ENCODE measurements at regions of chr17 and their contacts with region 1.

Region 1: GRCh38 chr17:43483674-43484372 is at the start of gene DHX8:
- DNase-seq: peak; percentile 99
- H3K4me3 Mint-ChIP-seq: peak within 1 kb of the TSS; percentile 99
- H3K27ac Mint-ChIP-seq: peak within 1 kb of the TSS; percentile 95
- H3K4me1 Mint-ChIP-seq: peaks cover 18% of the 10 kb centered on the region
- H3K27me3 Mint-ChIP-seq: no peaks in the 10 kb centered on the region
- total RNA-seq, gene DHX8: 47.8 to 54.1 TPM

Region 2: GRCh38 chr17:43211480-43212402 is 272.1 kb before region 1 on chr17 and contains the start of gene TMEM106A:
- CTCF ChIA-PET with region 1: no interaction called
- POLR2A ChIA-PET with region 1: no interaction called
- intact Hi-C with region 1: loop called (anchors 10 kb)
- DNase-seq: peak; percentile 85
- H3K4me3 Mint-ChIP-seq: peak within 1 kb of the TSS; percentile 88
- H3K27ac Mint-ChIP-seq: peak within 1 kb of the TSS; percentile 82
- H3K4me1 Mint-ChIP-seq: peaks cover 27% of the 10 kb centered on the region
- H3K27me3 Mint-ChIP-seq: no peaks in the 10 kb centered on the region
- total RNA-seq, gene TMEM106A: 10.1 to 10.4 TPM

Region 3: DNA sequence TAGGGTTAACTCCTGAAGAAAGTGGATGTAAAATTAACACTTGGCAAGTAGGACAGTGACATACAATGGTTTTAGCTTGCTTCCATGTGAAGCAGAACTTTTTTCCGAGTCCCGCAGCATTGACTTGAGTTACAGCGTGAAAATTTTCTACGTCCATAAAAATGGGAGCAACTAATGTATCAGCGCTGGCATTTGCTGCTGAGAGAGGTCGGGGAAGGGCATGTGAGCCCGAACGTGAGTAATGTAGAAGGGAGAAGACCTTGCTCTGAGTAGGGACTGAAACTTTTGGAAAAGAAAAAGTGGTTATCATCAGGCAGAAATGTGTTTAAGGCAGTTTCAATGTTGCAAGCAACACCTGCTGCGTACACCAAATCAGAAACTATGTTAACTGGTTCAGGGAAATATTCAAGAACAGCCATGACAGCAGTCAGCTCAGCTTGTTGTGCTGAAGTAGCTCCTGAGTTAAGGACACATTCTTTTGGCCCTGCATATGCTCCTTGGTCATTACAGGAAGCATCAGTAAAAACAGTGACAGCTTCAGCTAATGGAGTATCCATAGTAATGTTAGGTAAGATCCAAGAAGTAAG is 155.9 kb before region 1 on chr17:
- CTCF ChIA-PET with region 1: no interaction called
- POLR2A ChIA-PET with region 1: no interaction called
- intact Hi-C with region 1: no loop called
- DNase-seq: no peak
- H3K4me3 Mint-ChIP-seq: no peak overlapping the region
- H3K27ac Mint-ChIP-seq: no peak overlapping the region
- H3K4me1 Mint-ChIP-seq: peaks cover 3% of the 10 kb centered on the region
- H3K27me3 Mint-ChIP-seq: peaks cover 25% of the 10 kb centered on the region

Region 4: DNA sequence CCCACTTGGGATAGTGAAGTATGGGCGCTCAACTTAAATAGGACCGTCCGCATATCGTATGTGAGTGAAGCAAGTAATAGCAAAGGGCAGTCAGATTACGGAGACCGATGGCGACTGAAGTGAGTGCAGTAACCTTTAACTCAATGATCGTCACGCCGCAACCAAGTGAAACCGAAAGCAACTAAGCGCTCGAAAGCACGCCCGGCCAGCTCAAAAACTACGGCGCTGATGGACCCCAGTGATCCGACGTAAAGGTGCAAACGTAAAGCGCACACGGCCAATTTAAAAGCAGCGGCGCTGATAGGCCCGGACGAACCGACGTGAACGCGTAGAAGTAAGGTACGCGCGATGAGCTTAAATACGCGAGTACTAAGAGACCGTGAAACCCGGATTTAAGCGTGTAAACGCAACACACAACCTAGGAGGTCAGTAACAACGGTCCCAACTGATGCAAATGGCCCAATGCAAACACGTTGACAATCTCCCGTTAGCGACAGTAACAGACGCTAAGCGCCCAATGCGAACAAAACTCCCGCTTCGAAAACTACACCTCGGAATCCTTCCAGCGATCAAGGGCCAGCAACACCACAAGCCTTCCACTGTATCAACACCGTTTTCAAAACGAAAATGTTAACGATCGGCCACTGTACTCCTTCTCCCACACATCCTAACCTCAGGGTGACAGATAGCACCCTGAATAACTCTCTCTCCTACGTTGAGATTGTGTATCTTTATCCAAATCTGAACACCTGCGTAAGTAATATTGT is 122.9 kb before region 1 on chr17:
- CTCF ChIA-PET with region 1: interaction called, 9 read pairs
- POLR2A ChIA-PET with region 1: interaction called, 18 read pairs
- intact Hi-C with region 1: loop called (anchors 1 kb)
- DNase-seq: peak; percentile 93
- H3K4me3 Mint-ChIP-seq: peak overlapping the region; percentile 86
- H3K27ac Mint-ChIP-seq: peak overlapping the region; percentile 99
- H3K4me1 Mint-ChIP-seq: peaks cover 29% of the 10 kb centered on the region
- H3K27me3 Mint-ChIP-seq: peaks cover 11% of the 10 kb centered on the region

Region 5: GRCh38 chr17:43367737-43368242 is 116.0 kb before region 1 on chr17:
- CTCF ChIA-PET with region 1: interaction called, 33 read pairs
- POLR2A ChIA-PET with region 1: interaction called, 47 read pairs
- intact Hi-C with region 1: loop called (anchors 1 kb)
- DNase-seq: peak; percentile 49
- H3K4me3 Mint-ChIP-seq: peak overlapping the region; percentile 94
- H3K27ac Mint-ChIP-seq: peak overlapping the region; percentile 100
- H3K4me1 Mint-ChIP-seq: peaks cover 36% of the 10 kb centered on the region
- H3K27me3 Mint-ChIP-seq: no peaks in the 10 kb centered on the region

Region 6: GRCh38 chr17:43388359-43389045 is 95.3 kb before region 1 on chr17:
- CTCF ChIA-PET with region 1: interaction called, 261 read pairs
- POLR2A ChIA-PET with region 1: interaction called, 17 read pairs
- intact Hi-C with region 1: loop called (anchors 1 kb)
- DNase-seq: peak; percentile 94
- H3K4me3 Mint-ChIP-seq: peak overlapping the region; percentile 87
- H3K27ac Mint-ChIP-seq: peak overlapping the region; percentile 97
- H3K4me1 Mint-ChIP-seq: peaks cover 18% of the 10 kb centered on the region
- H3K27me3 Mint-ChIP-seq: no peaks in the 10 kb centered on the region

Region 7: GRCh38 chr17:43469145-43469544 is 14.7 kb before region 1 on chr17:
- CTCF ChIA-PET with region 1: interaction called, 11 read pairs
- POLR2A ChIA-PET with region 1: no interaction called
- intact Hi-C with region 1: no loop called
- DNase-seq: no peak
- H3K4me3 Mint-ChIP-seq: no peak overlapping the region
- H3K27ac Mint-ChIP-seq: no peak overlapping the region
- H3K4me1 Mint-ChIP-seq: no peaks in the 10 kb centered on the region
- H3K27me3 Mint-ChIP-seq: peaks cover 12% of the 10 kb centered on the region

Region 8: DNA sequence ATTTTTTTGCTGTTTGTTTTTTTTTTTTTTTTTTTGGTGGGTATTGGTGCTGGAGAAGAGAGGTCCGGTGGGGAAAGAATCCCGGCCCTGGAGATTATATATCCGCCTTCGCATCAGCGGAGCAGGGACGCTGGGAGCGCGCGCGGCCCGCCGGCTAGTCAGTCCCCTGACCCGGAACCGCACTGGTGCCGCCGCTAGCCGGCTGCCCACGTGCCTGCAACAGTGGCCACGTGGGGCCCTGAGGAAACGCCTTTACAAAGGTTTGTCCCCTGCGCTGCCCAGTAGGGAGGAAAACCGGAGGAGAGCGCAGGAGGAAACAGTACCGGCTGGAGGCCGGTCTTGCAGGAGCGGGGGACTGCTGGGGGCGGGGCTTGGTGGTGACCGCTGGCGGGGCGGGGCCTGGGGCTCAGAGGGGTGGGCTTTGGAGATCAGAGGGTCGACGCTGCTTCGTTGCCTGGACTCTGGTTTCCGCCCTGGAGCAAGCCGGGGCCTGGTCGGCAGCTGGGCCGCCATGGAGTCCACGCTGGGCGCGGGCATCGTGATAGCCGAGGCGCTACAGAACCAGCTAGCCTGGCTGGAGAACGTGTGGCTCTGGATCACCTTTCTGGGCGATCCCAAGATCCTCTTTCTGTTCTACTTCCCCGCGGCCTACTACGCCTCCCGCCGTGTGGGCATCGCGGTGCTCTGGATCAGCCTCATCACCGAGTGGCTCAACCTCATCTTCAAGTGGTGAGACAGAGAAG is 586.8 kb after region 1 on chr17 and contains the start of gene G6PC3:
- CTCF ChIA-PET with region 1: no interaction called
- POLR2A ChIA-PET with region 1: no interaction called
- intact Hi-C with region 1: no loop called
- DNase-seq: peak; percentile 95
- H3K4me3 Mint-ChIP-seq: peak within 1 kb of the TSS; percentile 97
- H3K27ac Mint-ChIP-seq: peak within 1 kb of the TSS; percentile 95
- H3K4me1 Mint-ChIP-seq: peaks cover 30% of the 10 kb centered on the region
- H3K27me3 Mint-ChIP-seq: no peaks in the 10 kb centered on the region
- total RNA-seq, gene G6PC3: 20.7 to 21.9 TPM

Measured in activated CD4-positive, alpha-beta memory T cell treated with anti-CD3 and anti-CD28 coated beads for 36 hours (primary cell).